ENCODE measurements at regions of chr10 and their contacts with region 1.

Region 1: DNA sequence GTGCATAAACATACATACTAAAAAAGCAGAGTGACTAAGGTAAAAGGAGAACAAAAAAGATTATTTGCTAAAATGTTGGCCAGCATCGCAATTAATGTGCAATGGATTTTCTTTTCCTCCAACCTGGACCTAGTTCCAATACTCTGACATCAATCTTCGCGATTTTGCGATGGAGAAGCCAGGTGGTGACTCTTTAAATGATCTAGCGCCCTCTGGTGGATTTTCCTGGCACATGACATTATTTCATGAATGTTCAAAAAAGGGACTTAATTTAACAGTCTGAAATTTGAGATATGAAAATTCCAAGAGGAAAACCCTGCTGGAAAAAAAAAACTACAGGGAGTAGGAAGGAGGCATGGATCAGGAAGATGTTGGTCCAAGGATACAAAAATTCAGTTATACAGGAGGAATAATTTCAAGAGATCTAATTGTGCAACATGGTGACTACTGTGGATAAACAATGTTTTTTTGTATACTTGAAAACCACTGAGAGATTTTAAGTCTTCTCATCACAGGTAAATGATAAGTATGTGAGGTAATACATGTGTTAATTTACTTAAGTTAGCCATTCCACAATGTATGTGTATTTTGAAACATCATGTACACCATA is 4.3 kb upstream of the KCNMA1 start:
- DNase-seq: peak; percentile 80
- H3K4me3 ChIP-seq: no peak overlapping the region
- H3K27ac ChIP-seq: no peak overlapping the region
- H3K4me1 ChIP-seq: peaks cover 4% of the 10 kb centered on the region
- H3K27me3 ChIP-seq: peaks cover 43% of the 10 kb centered on the region
- CTCF ChIP-seq: peak; percentile 87

Region 2: GRCh38 chr10:77146712-77147336 is 495.1 kb before region 1 on chr10:
- CTCF ChIA-PET with region 1: interaction called, 10 read pairs
- POLR2A ChIA-PET with region 1: no interaction called
- intact Hi-C with region 1: no loop called
- DNase-seq: no peak
- H3K4me3 ChIP-seq: no peak overlapping the region
- H3K27ac ChIP-seq: no peak overlapping the region
- H3K4me1 ChIP-seq: no peaks in the 10 kb centered on the region
- H3K27me3 ChIP-seq: no peaks in the 10 kb centered on the region
- CTCF ChIP-seq: no peak

Region 3: DNA sequence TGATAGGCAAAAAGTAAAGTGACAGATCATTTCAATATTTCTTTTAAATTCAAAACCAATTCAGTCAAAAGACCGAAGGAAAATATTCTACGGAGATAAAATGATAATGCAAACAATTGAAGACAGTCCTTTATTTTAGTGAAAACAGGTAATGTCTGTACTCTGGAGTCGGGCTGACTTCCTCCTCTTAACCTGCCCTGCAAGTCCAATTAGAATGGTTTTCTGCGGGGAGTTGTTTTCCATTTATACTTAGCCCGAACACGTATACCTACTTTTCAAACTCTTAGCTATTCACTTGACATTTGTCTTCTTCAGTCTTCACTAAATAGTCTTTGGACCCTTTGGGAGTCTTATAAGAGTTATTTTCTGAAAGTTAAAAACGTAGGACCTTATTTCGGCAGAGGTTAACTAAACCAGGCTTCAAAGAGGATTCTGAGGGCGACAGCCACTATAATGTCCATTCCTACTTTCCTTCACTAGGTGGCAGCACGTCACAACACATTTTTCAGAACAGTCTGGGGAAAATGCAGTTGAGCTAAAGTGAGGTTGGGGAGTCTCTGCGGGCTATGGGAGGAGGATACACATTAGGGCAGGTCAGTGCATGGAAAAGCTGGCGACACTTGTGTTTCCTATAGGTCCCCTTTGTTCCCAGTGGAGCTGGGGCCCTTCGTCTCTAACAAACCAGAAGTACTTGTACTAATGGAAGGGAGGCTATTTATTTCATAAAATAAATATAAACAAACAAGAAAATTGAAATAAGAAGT is 476.3 kb before region 1 on chr10:
- CTCF ChIA-PET with region 1: interaction called, 3 read pairs
- POLR2A ChIA-PET with region 1: no interaction called
- intact Hi-C with region 1: loop called (anchors 2 kb)
- DNase-seq: peak; percentile 76
- H3K4me3 ChIP-seq: no peak overlapping the region
- H3K27ac ChIP-seq: no peak overlapping the region
- H3K4me1 ChIP-seq: no peaks in the 10 kb centered on the region
- H3K27me3 ChIP-seq: peaks cover 3% of the 10 kb centered on the region
- CTCF ChIP-seq: peak; percentile 79

Region 4: GRCh38 chr10:77173615-77174461 is 468.1 kb before region 1 on chr10:
- CTCF ChIA-PET with region 1: interaction called, 11 read pairs
- POLR2A ChIA-PET with region 1: no interaction called
- intact Hi-C with region 1: loop called (anchors 1 kb)
- DNase-seq: peak; percentile 79
- H3K4me3 ChIP-seq: no peak overlapping the region
- H3K27ac ChIP-seq: no peak overlapping the region
- H3K4me1 ChIP-seq: no peaks in the 10 kb centered on the region
- H3K27me3 ChIP-seq: no peaks in the 10 kb centered on the region
- CTCF ChIP-seq: peak; percentile 91

Region 5: DNA sequence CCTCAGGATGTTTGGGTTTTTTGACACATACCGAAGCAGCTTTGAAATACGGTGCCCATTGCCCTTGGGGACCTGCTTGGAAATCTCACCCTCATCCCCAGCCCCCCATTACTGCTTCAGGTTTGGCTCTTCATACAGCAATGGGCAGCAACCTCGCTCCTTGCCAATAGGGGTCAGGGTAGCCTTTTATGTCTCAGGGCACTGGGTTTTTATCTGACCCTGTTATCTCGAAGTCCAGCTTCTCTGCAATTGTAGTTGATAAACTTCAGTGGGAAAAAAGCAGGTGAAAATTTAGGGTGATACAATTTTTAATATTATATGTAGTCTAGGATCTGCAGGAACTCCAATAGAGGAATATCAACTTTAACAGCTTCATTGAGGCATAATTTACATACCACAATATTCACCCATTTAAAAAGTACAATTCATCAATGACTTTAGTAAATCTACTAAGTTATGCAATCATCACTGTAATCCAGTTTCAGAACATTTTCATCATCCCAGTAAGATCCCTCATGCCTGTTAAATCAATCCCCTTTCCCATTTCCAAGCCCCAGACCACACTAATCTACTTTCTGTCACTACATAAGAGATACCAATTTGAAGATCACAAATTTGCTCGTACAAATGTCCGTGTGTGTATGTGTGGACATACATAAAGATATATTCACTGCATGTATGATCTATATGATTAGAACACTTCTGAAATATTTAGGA is 390.4 kb before region 1 on chr10:
- CTCF ChIA-PET with region 1: no interaction called
- POLR2A ChIA-PET with region 1: no interaction called
- intact Hi-C with region 1: loop called (anchors 5 kb)
- DNase-seq: no peak
- H3K4me3 ChIP-seq: no peak overlapping the region
- H3K27ac ChIP-seq: no peak overlapping the region
- H3K4me1 ChIP-seq: peaks cover 9% of the 10 kb centered on the region
- H3K27me3 ChIP-seq: no peaks in the 10 kb centered on the region
- CTCF ChIP-seq: peak; percentile 40

Region 6: DNA sequence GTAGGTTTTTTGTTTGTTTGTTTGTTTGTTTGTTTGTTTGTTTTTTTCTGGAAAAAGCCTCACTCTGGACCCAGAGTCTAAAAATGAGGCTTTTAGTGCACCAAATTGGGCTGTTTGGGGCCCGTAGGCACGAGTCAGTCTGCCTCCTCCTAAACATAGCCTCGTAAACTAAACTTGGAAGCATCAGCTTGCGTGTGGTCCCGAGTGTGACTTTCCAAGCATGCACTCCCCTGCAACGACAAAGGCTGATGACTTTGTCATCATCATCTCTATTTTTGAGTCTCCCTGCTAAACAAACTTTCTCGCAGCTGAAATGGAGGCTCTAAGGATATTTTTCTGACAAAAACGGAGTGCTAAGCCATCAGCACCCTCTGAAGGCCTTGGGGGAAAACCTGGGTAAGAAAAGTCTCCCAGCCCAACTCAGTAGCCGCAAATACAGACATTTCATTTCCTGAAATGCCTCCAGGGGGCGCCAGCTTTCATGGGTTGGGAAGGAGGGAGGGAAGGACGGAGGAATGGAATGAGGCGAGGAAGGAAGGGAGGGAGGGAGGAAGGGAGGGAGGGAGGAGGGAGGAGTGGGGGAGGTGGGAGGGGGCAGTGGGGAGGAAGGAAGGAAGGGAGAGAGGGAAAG is 250.2 kb before region 1 on chr10:
- CTCF ChIA-PET with region 1: interaction called, 10 read pairs
- POLR2A ChIA-PET with region 1: no interaction called
- intact Hi-C with region 1: loop called (anchors 2 kb)
- DNase-seq: peak; percentile 86
- H3K4me3 ChIP-seq: no peak overlapping the region
- H3K27ac ChIP-seq: no peak overlapping the region
- H3K4me1 ChIP-seq: no peaks in the 10 kb centered on the region
- H3K27me3 ChIP-seq: peaks cover 7% of the 10 kb centered on the region
- CTCF ChIP-seq: peak; percentile 69

Region 7: GRCh38 chr10:77494327-77494726 is 147.6 kb before region 1 on chr10:
- CTCF ChIA-PET with region 1: no interaction called
- POLR2A ChIA-PET with region 1: no interaction called
- intact Hi-C with region 1: loop called (anchors 1 kb)
- DNase-seq: peak; percentile 40
- H3K4me3 ChIP-seq: no peak overlapping the region
- H3K27ac ChIP-seq: no peak overlapping the region
- H3K4me1 ChIP-seq: no peaks in the 10 kb centered on the region
- H3K27me3 ChIP-seq: peaks cover 9% of the 10 kb centered on the region
- CTCF ChIP-seq: peak; percentile 48

Measured in A673 (cell line).